ENCODE measurements at regions of chr1 and their contacts with region 1.

Region 1: GRCh38 chr1:198472113-198472512 is 68.4 kb downstream of the ATP6V1G3 start:
- DNase-seq: no peak
- ATAC-seq: no peak
- H3K4me3 ChIP-seq: no peak overlapping the region
- H3K27ac ChIP-seq: no peak overlapping the region
- H3K4me1 ChIP-seq: no peaks in the 10 kb centered on the region
- H3K27me3 ChIP-seq: no peaks in the 10 kb centered on the region
- CTCF ChIP-seq: no peak
- POLR2A ChIP-seq: no peak

Region 2: DNA sequence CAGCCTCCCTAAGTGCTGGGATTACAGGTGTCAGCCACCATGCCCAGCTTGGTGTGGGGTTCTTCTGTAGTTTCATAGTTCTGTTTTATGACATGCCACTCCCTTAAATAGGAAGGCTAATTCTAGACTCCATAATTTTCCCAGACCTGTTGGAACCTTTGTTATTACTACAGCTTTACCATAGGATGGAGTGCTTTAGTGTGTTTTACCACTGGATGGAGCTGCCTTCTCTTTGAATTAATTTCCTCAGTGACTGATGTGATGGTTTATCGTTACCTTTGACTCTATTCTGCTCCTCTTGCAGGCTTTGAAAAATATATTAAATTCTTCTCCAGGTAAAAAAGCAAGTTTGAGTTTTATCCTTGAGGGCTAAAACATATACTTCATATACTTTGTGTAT is 399.9 kb before region 1 on chr1:
- intact Hi-C with region 1: loop called in 2 of 10 experiments (anchors 5 kb)
- DNase-seq: no peak
- ATAC-seq: no peak
- H3K4me3 ChIP-seq: no peak overlapping the region
- H3K27ac ChIP-seq: no peak overlapping the region
- H3K4me1 ChIP-seq: no peaks in the 10 kb centered on the region
- H3K27me3 ChIP-seq: peaks cover 0 to 7% (median 0%) of the 10 kb centered on the region in 9 donors
- CTCF ChIP-seq: peak in 8 of 12 donors; percentile 7 to 44 (median 24)
- POLR2A ChIP-seq: no peak